Activated B cell treated with CpG ODN at 0.5 μM for 24 hours (primary cell): ENCODE measurements at regions of chr11 and their contacts with region 1.

Region 1: DNA sequence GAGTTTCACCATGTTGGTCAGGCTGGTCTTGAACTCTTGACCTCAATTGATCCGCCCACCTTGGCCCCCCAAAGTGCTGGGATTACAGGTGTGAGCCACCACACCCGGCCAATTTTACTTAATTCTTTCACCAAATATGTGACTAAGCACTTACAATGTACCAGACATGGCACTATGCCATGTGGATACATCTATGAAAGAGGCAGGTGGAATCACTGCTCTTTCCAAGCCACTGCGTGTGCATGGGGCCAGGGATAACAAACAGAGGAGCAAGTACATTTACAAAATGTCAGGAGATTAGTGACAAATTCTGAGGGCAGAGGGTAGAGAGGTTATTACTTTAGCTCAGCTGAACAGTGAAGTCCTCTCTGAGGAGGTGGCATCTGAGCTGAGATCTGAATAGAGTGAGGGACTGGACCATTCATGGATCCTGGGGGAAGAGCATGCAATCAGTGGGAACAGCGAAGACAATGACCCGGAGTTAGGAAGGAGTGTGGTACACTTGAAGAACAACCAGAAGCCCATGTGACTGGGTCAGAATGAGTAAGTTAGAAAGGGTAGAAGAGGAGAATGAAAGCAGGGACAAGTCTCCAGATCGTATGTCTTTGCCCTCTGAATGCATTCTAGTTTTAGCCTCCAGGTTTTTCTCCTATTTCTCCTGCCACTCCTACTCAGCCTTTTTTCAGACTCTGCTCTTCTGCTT is 38.3 kb upstream of the GRAMD1B start:
- DNase-seq: no peak
- ATAC-seq: no peak
- H3K4me3 Mint-ChIP-seq: no peak overlapping the region
- H3K27ac Mint-ChIP-seq: no peak overlapping the region
- H3K4me1 Mint-ChIP-seq: no peaks in the 10 kb centered on the region
- H3K27me3 Mint-ChIP-seq: no peaks in the 10 kb centered on the region
- CTCF ChIP-seq: no peak

Region 2: GRCh38 chr11:124421043-124421442 is 1029.2 kb after region 1 on chr11:
- CTCF ChIA-PET with region 1: no interaction called
- POLR2A ChIA-PET with region 1: no interaction called
- intact Hi-C with region 1: loop called (anchors 10 kb)
- DNase-seq: no peak
- ATAC-seq: no peak
- H3K4me3 Mint-ChIP-seq: no peak overlapping the region
- H3K27ac Mint-ChIP-seq: no peak overlapping the region
- H3K4me1 Mint-ChIP-seq: no peaks in the 10 kb centered on the region
- H3K27me3 Mint-ChIP-seq: peaks cover 28% of the 10 kb centered on the region
- CTCF ChIP-seq: no peak